ENCODE measurements at regions of chr9 and their contacts with region 1.

Region 1: DNA sequence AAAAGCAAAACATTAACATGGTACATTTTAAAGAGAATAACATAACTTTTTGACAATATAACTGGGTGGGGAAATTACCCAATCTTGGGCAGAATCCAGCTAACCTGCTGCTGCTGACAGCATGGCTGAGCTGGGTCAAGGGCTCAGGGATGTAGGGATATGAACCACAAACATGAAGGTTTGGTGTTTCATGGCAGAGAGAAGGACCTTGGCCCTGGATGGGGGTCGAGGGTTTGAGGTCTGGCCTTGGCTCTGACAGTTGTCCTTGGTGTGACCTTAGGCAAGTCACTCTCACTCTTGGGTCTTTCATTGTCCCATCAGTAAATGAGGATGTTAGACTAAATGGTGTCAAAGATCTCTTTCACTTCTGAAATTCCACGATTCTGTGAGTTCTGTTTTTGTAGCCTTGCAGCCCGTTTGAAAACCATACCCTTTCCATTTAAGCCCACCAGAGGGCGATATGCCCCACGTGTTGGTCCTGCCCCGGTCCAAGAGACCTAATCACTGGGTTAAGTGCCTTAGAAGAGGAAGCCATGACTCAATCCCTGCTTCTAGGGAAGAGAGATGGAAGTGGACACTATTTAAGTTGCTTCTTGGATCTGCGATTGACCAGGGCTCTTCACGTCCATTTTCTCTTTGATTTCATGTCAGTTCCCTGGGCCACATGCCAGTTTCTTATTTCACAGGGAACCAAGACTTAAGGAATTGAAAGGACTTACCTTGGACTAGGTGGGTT is 56.8 kb upstream of the TEX48 start:
- DNase-seq: peak; percentile 87
- H3K4me3 Mint-ChIP-seq: no peak overlapping the region
- H3K27ac Mint-ChIP-seq: no peak overlapping the region
- H3K4me1 Mint-ChIP-seq: peaks cover 23% of the 10 kb centered on the region
- H3K27me3 Mint-ChIP-seq: no peaks in the 10 kb centered on the region
- CTCF ChIP-seq: peak; percentile 85

Region 2: GRCh38 chr9:114397848-114398605 is 340.7 kb before region 1 on chr9:
- CTCF ChIA-PET with region 1: no interaction called
- POLR2A ChIA-PET with region 1: no interaction called
- intact Hi-C with region 1: loop called (anchors 1 kb)
- DNase-seq: peak; percentile 96
- H3K4me3 Mint-ChIP-seq: peak overlapping the region; percentile 81
- H3K27ac Mint-ChIP-seq: peak overlapping the region; percentile 90
- H3K4me1 Mint-ChIP-seq: peaks cover 9% of the 10 kb centered on the region
- H3K27me3 Mint-ChIP-seq: no peaks in the 10 kb centered on the region
- CTCF ChIP-seq: peak; percentile 5

Region 3: GRCh38 chr9:114551883-114552685 is 186.7 kb before region 1 on chr9:
- CTCF ChIA-PET with region 1: no interaction called
- POLR2A ChIA-PET with region 1: no interaction called
- intact Hi-C with region 1: no loop called
- DNase-seq: peak; percentile 97
- H3K4me3 Mint-ChIP-seq: no peak overlapping the region
- H3K27ac Mint-ChIP-seq: peak overlapping the region; percentile 91
- H3K4me1 Mint-ChIP-seq: peaks cover 18% of the 10 kb centered on the region
- H3K27me3 Mint-ChIP-seq: peaks cover 8% of the 10 kb centered on the region
- CTCF ChIP-seq: no peak

Region 4: GRCh38 chr9:114662081-114662989 is 76.4 kb before region 1 on chr9:
- CTCF ChIA-PET with region 1: interaction called, 5 read pairs
- POLR2A ChIA-PET with region 1: no interaction called
- intact Hi-C with region 1: loop called (anchors 1 kb)
- DNase-seq: peak; percentile 64
- H3K4me3 Mint-ChIP-seq: no peak overlapping the region
- H3K27ac Mint-ChIP-seq: no peak overlapping the region
- H3K4me1 Mint-ChIP-seq: peaks cover 8% of the 10 kb centered on the region
- H3K27me3 Mint-ChIP-seq: no peaks in the 10 kb centered on the region
- CTCF ChIP-seq: peak; percentile 88